Naive thymus-derived CD4-positive, alpha-beta T cell (primary cell): ENCODE measurements at regions of chr5 and their contacts with region 1.

Region 1: GRCh38 chr5:141475625-141476131 is at the start of gene PCDHGC3:
- DNase-seq: peak in 2 of 9 donors; percentile 13 to 50
- ATAC-seq: peak; percentile 78
- H3K4me3 ChIP-seq: peak within 1 kb of the TSS; percentile 67
- H3K4me3 Mint-ChIP-seq: peak within 1 kb of the TSS; percentile 83 to 95 (median 91)
- H3K27ac ChIP-seq: no peak within 1 kb of the TSS
- H3K27ac Mint-ChIP-seq: peak within 1 kb of the TSS in 2 of 9 donors; percentile 21 to 87
- H3K4me1 ChIP-seq: peaks cover 5 to 13% of the 10 kb centered on the region in 2 donors
- H3K4me1 Mint-ChIP-seq: peaks cover 16 to 32% (median 29%) of the 10 kb centered on the region in 7 donors
- H3K27me3 ChIP-seq: peaks cover 3 to 13% of the 10 kb centered on the region in 2 donors
- H3K27me3 Mint-ChIP-seq: peaks cover 52 to 71% (median 55%) of the 10 kb centered on the region in 5 donors
- total RNA-seq, gene PCDHGC3: 0.15 to 0.76 (median 0.16) TPM

Region 2: GRCh38 chr5:141420855-141421496 is 54.7 kb before region 1 on chr5 and contains the start of gene PCDHGA11:
- CTCF ChIA-PET with region 1: no interaction called
- POLR2A ChIA-PET with region 1: no interaction called
- intact Hi-C with region 1: loop called in 1 of 2 experiments (anchors 5 kb)
- DNase-seq: peak in 3 of 9 donors; percentile 25 to 28 (median 26)
- ATAC-seq: peak; percentile 70
- H3K4me3 ChIP-seq: no peak within 1 kb of the TSS
- H3K4me3 Mint-ChIP-seq: peak within 1 kb of the TSS; percentile 52 to 90 (median 77)
- H3K27ac ChIP-seq: no peak within 1 kb of the TSS
- H3K27ac Mint-ChIP-seq: peak within 1 kb of the TSS in 7 of 9 donors; percentile 51 to 73 (median 64)
- H3K4me1 ChIP-seq: no peaks in the 10 kb centered on the region
- H3K4me1 Mint-ChIP-seq: peaks cover 0 to 19% (median 7%) of the 10 kb centered on the region in 7 donors
- H3K27me3 ChIP-seq: peaks cover 8 to 33% of the 10 kb centered on the region in 2 donors
- H3K27me3 Mint-ChIP-seq: peaks cover 68 to 87% (median 78%) of the 10 kb centered on the region in 5 donors
- total RNA-seq, gene PCDHGA11: 0.16 to 0.29 (median 0.21) TPM in 4 of 5 experiments, not detected in the other

Region 3: DNA sequence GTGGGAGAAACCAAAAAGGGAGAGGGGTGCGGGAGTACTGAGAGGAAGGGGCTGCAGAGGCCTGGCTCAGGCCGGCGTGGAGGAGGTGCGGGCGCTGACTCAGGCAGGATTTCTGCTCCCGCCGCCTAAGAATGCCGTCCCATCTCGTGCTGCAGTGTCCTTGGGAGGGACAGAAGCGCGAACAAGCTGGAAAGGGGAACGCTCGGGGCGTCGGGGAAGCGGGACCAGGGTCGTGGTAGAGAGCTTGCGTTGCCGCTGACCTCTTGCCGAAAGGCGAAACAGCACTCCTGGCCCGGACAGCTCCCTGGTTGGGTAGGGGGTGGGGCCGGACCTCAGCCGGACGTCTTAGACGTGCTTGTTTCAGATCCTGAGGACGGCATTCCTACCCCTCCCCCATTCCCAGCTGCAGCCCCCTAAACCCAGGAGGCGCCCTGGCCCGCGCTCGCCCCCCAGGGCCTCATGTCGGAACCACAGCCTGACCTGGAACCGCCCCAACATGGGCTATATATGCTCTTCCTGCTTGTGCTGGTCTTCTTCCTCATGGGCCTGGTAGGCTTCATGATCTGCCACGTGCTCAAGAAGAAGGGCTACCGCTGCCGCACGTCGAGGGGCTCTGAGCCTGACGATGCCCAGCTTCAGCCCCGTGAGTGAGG is 162.2 kb after region 1 on chr5:
- CTCF ChIA-PET with region 1: no interaction called
- POLR2A ChIA-PET with region 1: no interaction called
- intact Hi-C with region 1: no loop called
- DNase-seq: peak; percentile 32 to 57 (median 46)
- ATAC-seq: peak; percentile 41
- H3K4me3 ChIP-seq: peak overlapping the region; percentile 81
- H3K4me3 Mint-ChIP-seq: peak overlapping the region; percentile 78 to 96 (median 90)
- H3K27ac ChIP-seq: peak overlapping the region; percentile 88
- H3K27ac Mint-ChIP-seq: peak overlapping the region; percentile 72 to 93 (median 90)
- H3K4me1 ChIP-seq: peaks cover 23 to 24% of the 10 kb centered on the region in 2 donors
- H3K4me1 Mint-ChIP-seq: peaks cover 30 to 55% (median 38%) of the 10 kb centered on the region in 7 donors
- H3K27me3 ChIP-seq: no peaks in the 10 kb centered on the region
- H3K27me3 Mint-ChIP-seq: no peaks in the 10 kb centered on the region